Tibial artery (tissue), 4 donors: ENCODE measurements at regions of chr11 and their contacts with region 1.

Region 1: GRCh38 chr11:46800177-46800576 is 45.9 kb downstream of the CKAP5 start:
- DNase-seq: no peak
- H3K4me3 ChIP-seq: no peak overlapping the region
- H3K27ac ChIP-seq: no peak overlapping the region
- H3K4me1 ChIP-seq: no peaks in the 10 kb centered on the region
- H3K27me3 ChIP-seq: no peaks in the 10 kb centered on the region
- CTCF ChIP-seq: no peak

Region 2: DNA sequence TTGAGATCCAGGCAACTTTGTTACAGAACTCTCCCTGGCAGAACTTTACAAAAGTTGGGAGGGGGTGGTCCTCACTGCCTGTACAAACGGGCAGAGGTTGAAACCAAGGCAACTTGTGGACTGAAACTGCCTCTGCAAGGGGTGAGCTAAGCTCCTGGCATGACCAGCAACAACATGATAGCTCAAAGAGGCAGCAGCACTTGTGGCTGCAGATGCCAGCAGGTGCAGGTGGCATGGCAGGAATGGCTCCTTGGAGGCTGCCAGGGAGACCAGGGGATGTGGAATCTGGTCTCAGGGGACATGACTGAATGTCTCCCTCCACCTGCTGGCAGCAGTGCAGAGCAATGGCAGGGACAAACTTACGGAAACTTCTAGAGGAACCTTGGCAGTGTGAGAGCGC is 640.1 kb before region 1 on chr11:
- intact Hi-C with region 1: loop called (anchors 5 kb)
- DNase-seq: no peak
- H3K4me3 ChIP-seq: no peak overlapping the region
- H3K27ac ChIP-seq: no peak overlapping the region
- H3K4me1 ChIP-seq: no peaks in the 10 kb centered on the region
- H3K27me3 ChIP-seq: peaks cover 0 to 48% of the 10 kb centered on the region in 2 donors
- CTCF ChIP-seq: no peak

Region 3: GRCh38 chr11:46421257-46421880 is 378.8 kb before region 1 on chr11:
- intact Hi-C with region 1: no loop called
- DNase-seq: no peak
- H3K4me3 ChIP-seq: no peak overlapping the region
- H3K27ac ChIP-seq: no peak overlapping the region
- H3K4me1 ChIP-seq: no peaks in the 10 kb centered on the region
- H3K27me3 ChIP-seq: no peaks in the 10 kb centered on the region
- CTCF ChIP-seq: no peak

Region 4: GRCh38 chr11:46747150-46747549 is 53.0 kb before region 1 on chr11:
- intact Hi-C with region 1: no loop called
- DNase-seq: no peak
- H3K4me3 ChIP-seq: no peak overlapping the region
- H3K27ac ChIP-seq: no peak overlapping the region
- H3K4me1 ChIP-seq: no peaks in the 10 kb centered on the region
- H3K27me3 ChIP-seq: no peaks in the 10 kb centered on the region
- CTCF ChIP-seq: no peak

Region 5: GRCh38 chr11:46987183-46987582 is 187.0 kb after region 1 on chr11:
- intact Hi-C with region 1: no loop called
- DNase-seq: no peak
- H3K4me3 ChIP-seq: no peak overlapping the region
- H3K27ac ChIP-seq: no peak overlapping the region
- H3K4me1 ChIP-seq: no peaks in the 10 kb centered on the region
- H3K27me3 ChIP-seq: no peaks in the 10 kb centered on the region
- CTCF ChIP-seq: no peak